Prostate gland (tissue), 2 donors: ENCODE measurements at regions of chr3 and their contacts with region 1.

Region 1: GRCh38 chr3:44913868-44914468 is 39.6 kb downstream of the TGM4 start:
- DNase-seq: peak; percentile 61
- H3K4me3 ChIP-seq: no peak overlapping the region
- H3K27ac ChIP-seq: no peak overlapping the region
- H3K4me1 ChIP-seq: no peaks in the 10 kb centered on the region
- H3K27me3 ChIP-seq: peaks cover 3% of the 10 kb centered on the region
- CTCF ChIP-seq: peak; percentile 28 to 80 (median 74)
- POLR2A ChIP-seq: no peak

Region 2: DNA sequence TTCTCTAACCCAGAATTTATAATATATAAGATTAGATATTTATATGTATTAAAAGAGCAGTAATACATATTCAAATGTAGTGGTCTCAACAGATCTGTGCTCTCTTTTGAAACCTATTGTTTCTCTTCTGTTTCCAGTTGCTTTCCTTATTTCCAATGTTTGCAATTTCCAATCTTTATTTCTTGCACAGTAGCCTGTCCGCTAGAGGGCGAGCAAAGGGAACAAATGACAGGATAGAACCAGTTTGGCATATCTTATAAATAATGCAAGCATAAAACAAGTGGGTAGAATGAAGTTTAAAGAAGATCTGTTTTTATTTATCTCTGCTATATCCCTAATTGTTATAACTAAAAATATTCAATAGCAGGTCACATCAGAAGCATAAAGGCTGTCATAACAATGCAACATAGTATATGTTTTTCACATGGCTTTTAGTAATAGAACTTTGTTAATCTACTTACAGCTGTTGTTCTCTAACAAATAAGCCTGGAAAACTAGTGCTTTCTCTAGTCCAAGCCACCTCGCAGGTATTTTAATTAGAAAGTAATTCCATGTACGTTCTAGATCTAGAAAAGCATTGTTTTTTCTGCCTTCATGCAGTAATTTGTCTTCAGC is 590.5 kb before region 1 on chr3:
- intact Hi-C with region 1: loop called (anchors 10 kb)
- DNase-seq: peak; percentile 71
- H3K4me3 ChIP-seq: no peak overlapping the region
- H3K27ac ChIP-seq: no peak overlapping the region
- H3K4me1 ChIP-seq: peaks cover 5% of the 10 kb centered on the region
- H3K27me3 ChIP-seq: no peaks in the 10 kb centered on the region
- CTCF ChIP-seq: peak; percentile 68 to 81 (median 74)
- POLR2A ChIP-seq: no peak

Region 3: GRCh38 chr3:44529927-44530326 is 384.0 kb before region 1 on chr3:
- intact Hi-C with region 1: loop called (anchors 5 kb)
- DNase-seq: no peak
- H3K4me3 ChIP-seq: no peak overlapping the region
- H3K27ac ChIP-seq: no peak overlapping the region
- H3K4me1 ChIP-seq: no peaks in the 10 kb centered on the region
- H3K27me3 ChIP-seq: no peaks in the 10 kb centered on the region
- CTCF ChIP-seq: no peak
- POLR2A ChIP-seq: no peak